PC-3 (cell line): ENCODE measurements at regions of chr11 and their contacts with region 1.

Region 1: GRCh38 chr11:126231725-126232459 is 20.3 kb downstream of the FAM118B start:
- DNase-seq: peak; percentile 59
- ATAC-seq: peak; percentile 52
- H3K4me3 ChIP-seq: no peak overlapping the region
- H3K27ac ChIP-seq: peak overlapping the region; percentile 38
- H3K4me1 ChIP-seq: peaks cover 30% of the 10 kb centered on the region
- H3K27me3 ChIP-seq: no peaks in the 10 kb centered on the region
- CTCF ChIP-seq: no peak

Region 2: DNA sequence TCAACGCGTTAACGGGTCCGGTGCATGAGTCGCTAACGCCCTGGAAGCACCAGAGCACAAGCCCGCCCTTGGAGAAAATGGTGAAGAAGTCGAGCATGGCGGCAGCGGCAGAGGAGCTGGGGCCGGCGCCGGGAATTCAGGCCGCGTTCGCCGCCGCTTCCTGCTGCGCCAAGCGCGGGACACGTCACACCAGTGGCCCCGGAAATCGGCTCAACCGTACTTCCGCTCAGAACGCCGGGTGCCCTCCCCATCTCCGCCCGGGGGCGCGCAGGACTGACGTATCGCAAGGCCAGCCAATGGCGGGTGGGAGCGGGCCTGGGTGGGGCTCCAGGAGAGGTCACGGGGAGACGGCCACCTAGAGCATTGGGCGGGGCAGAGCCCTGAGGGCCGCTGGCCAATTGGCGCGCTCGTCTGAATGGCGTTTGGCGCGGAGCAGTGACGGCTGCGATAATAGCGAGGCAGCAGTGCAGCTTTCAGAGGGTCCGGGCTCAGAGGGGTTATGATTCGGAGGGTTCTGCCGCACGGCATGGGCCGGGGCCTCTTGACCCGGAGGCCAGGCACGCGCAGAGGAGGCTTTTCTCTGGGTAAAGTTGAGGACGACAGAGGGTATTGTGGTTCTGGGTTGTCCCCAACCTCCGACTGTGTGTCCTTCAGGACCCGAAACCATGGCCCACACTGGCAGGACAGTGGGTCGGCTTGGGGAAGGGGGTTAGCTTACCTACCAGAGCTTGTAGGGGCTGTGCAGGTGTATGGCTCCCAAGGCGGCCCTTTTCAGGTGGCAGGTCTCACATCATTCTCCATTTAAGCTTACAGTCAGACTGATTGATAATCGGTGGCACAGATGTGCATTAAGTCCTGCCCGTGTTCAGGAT is 37.1 kb after region 1 on chr11 and contains the starts of genes FOXRED1 and SRPRA:
- CTCF ChIA-PET with region 1: no interaction called
- POLR2A ChIA-PET with region 1: interaction called, 8 read pairs
- intact Hi-C with region 1: loop called (anchors 2 kb)
- DNase-seq: peak; percentile 100
- ATAC-seq: peak; percentile 96
- H3K4me3 ChIP-seq: peak within 1 kb of the TSS; percentile 96
- H3K27ac ChIP-seq: peak within 1 kb of the TSS; percentile 61
- H3K4me1 ChIP-seq: peaks cover 10% of the 10 kb centered on the region
- H3K27me3 ChIP-seq: no peaks in the 10 kb centered on the region
- CTCF ChIP-seq: no peak
- total RNA-seq, gene FOXRED1: 55.6 and 72.0 TPM in 2 replicates
- total RNA-seq, gene SRPRA: 140 and 143 TPM in 2 replicates

Region 3: DNA sequence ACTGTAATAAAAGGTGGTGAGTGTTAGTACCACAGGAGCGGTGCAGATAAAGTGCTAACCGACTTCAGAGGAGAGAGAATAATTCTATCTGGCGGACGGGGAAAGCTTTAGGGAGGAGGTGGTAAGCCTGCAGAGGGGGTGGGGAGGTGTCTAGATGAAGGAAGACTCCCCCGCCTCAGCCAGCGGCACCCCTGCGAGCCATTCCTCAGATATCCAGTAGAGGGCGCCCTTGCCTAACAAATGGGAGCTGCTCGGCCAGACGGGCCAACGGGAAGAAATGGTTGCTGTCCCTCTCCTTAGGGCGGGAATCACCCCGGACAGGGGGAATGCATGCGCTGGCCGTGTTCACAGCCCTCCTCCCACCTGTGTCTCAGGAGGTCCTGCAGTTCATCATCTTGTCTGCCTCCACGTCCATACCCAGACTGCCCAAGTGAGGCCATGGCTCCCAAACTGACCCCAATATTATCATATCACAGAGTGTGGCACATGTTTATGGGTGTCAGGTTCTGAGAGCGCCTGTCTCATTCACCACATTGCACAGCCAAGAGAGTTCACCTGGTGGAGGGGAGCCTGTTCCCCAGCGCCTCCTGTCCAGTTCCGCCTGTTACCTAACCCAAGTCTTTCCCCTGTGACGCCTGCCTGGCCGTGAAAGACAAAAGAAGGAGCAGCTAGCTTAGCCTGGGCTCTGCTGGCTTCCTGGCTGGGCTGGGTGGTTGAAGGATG is 209.1 kb after region 1 on chr11:
- CTCF ChIA-PET with region 1: no interaction called
- POLR2A ChIA-PET with region 1: no interaction called
- intact Hi-C with region 1: no loop called
- DNase-seq: peak; percentile 94
- ATAC-seq: peak; percentile 88
- H3K4me3 ChIP-seq: peak overlapping the region; percentile 34; the same call in 1 of the 2 replicates
- H3K27ac ChIP-seq: no peak overlapping the region
- H3K4me1 ChIP-seq: peaks cover 5% of the 10 kb centered on the region; the same call in 1 of the 2 replicates
- H3K27me3 ChIP-seq: no peaks in the 10 kb centered on the region
- CTCF ChIP-seq: peak; percentile 98